Dendritic cell treated with granulocyte-macrophage colony-stimulating factor and Interleukin-4, amounts not matched to agents 40 ng/mL and 50 ng/mL, for 4 days (primary cell): ENCODE measurements at regions of chr3 and their contacts with region 1.

Region 1: GRCh38 chr3:47522082-47522987 is 8.8 kb upstream of the ELP6 start:
- H3K4me3 Mint-ChIP-seq: no peak overlapping the region
- H3K27ac Mint-ChIP-seq: no peak overlapping the region
- H3K4me1 Mint-ChIP-seq: peaks cover 8% of the 10 kb centered on the region
- H3K27me3 Mint-ChIP-seq: no peaks in the 10 kb centered on the region

Region 2: DNA sequence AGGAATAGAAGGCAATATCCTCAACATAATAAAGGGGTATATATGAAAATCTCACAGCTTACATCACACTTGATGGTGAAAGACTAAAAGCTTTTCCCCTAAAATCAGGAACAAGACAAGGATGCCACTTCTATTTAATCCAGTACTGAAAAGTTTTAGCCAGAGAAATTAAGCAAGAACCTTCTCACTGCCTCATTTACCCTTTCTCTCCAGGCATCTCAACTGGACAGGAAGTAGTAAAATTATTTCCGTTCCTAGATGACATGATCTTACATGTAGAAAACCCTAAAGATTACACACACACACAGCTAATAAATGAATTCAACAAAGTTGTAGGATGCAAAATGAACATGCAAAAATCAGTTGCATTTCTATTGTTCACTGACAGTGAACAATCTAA is 57.7 kb before region 1 on chr3:
- intact Hi-C with region 1: no loop called
- H3K4me3 Mint-ChIP-seq: no peak overlapping the region
- H3K27ac Mint-ChIP-seq: no peak overlapping the region
- H3K4me1 Mint-ChIP-seq: peaks cover 39% of the 10 kb centered on the region
- H3K27me3 Mint-ChIP-seq: no peaks in the 10 kb centered on the region

Region 3: DNA sequence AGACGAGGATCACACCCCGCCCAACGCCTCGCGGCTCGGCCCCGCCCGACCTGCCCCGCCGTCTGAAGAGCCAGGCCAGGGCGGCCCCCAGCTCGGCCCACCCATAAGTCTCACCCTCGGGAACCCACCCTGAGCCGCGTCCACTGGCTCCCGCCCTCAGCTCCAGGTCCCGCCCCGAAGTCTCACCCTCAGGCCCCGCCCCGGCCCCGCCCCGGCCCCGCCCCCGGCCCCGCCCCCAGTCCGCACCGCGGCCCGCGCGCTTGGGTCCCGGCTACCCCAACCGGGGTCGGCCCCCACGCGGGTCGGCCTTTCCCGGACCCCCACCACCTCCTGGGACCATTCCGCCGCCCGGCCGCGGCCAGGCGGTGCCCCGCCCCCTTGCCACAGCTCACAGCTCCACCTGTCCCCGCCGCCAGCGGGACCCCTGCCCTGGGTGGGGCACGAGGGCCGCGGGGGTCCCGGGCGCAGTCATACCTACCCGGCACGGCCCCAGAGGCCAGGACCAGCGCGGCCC is 55.8 kb after region 1 on chr3:
- intact Hi-C with region 1: no loop called
- H3K4me3 Mint-ChIP-seq: peak overlapping the region; percentile 72
- H3K27ac Mint-ChIP-seq: no peak overlapping the region
- H3K4me1 Mint-ChIP-seq: peaks cover 22% of the 10 kb centered on the region
- H3K27me3 Mint-ChIP-seq: peaks cover 83% of the 10 kb centered on the region

Region 4: GRCh38 chr3:47802734-47803477 is 280.6 kb after region 1 on chr3 and contains the start of gene DHX30:
- intact Hi-C with region 1: loop called (anchors 5 kb)
- H3K4me3 Mint-ChIP-seq: peak within 1 kb of the TSS; percentile 92
- H3K27ac Mint-ChIP-seq: peak within 1 kb of the TSS; percentile 76
- H3K4me1 Mint-ChIP-seq: peaks cover 29% of the 10 kb centered on the region
- H3K27me3 Mint-ChIP-seq: no peaks in the 10 kb centered on the region